Endothelial cell of umbilical vein (primary cell): ENCODE measurements at regions of chr7 and their contacts with region 1.

Region 1: GRCh38 chr7:131071786-131072504 is 255.7 kb upstream of the MKLN1 start:
- DNase-seq: peak; percentile 96
- H3K4me3 ChIP-seq: peak overlapping the region in 1 of 3 experiments; percentile 51
- H3K27ac ChIP-seq: peak overlapping the region; percentile 88
- H3K4me1 ChIP-seq: peaks cover 17% of the 10 kb centered on the region
- H3K27me3 ChIP-seq: no peaks in the 10 kb centered on the region
- CTCF ChIP-seq: peak; percentile 11 to 16
- POLR2A ChIP-seq: no peak

Region 2: DNA sequence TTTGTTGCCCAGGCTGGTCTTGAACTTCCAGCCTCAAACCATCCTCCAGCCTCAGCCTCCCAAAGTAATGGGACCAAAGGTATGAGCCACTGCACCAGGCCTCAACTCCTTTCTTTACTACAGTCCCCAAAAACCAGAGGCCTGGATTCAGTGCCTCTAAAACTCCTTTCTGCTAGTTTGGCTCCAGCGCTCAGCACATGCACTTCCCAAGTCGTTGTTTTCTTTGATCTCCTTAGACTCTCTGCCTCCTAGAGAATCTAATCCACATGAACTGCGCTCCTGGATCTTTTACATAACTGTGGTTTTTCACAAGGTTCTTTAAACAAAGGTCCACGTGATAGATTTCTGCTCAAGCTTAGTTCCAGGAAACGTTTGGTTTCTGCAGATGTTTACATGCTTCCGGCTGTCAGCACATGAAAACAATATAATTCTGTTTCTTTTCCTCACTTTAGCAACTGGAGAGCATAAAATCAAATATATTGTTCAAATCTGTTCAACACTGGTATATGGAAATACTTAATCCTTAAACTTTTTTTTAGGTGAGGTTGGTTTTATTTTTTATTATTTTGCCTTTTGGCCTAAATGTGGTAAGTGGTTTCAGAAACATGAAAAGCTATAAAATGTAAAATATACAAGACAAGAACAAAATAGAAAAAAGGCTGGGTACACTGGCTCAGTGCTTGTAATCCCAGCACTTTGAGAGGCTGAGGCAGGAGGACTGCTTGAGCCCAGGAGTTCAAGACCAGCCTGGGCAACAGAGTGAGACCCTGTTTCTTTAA is 14.7 kb before region 1 on chr7:
- CTCF ChIA-PET with region 1: interaction called, 27 read pairs
- POLR2A ChIA-PET with region 1: interaction called, 4 read pairs
- dilution Hi-C with region 1: no loop called
- intact Hi-C with region 1: no loop called
- DNase-seq: peak; percentile 75
- H3K4me3 ChIP-seq: no peak overlapping the region
- H3K27ac ChIP-seq: peak overlapping the region; percentile 64
- H3K4me1 ChIP-seq: peaks cover 9% of the 10 kb centered on the region
- H3K27me3 ChIP-seq: no peaks in the 10 kb centered on the region
- CTCF ChIP-seq: no peak
- POLR2A ChIP-seq: no peak

Region 3: GRCh38 chr7:131096267-131096927 is 24.5 kb after region 1 on chr7:
- CTCF ChIA-PET with region 1: no interaction called
- POLR2A ChIA-PET with region 1: no interaction called
- dilution Hi-C with region 1: no loop called
- intact Hi-C with region 1: no loop called
- DNase-seq: no peak
- H3K4me3 ChIP-seq: no peak overlapping the region
- H3K27ac ChIP-seq: no peak overlapping the region
- H3K4me1 ChIP-seq: no peaks in the 10 kb centered on the region
- H3K27me3 ChIP-seq: no peaks in the 10 kb centered on the region
- CTCF ChIP-seq: no peak
- POLR2A ChIP-seq: no peak

Region 4: DNA sequence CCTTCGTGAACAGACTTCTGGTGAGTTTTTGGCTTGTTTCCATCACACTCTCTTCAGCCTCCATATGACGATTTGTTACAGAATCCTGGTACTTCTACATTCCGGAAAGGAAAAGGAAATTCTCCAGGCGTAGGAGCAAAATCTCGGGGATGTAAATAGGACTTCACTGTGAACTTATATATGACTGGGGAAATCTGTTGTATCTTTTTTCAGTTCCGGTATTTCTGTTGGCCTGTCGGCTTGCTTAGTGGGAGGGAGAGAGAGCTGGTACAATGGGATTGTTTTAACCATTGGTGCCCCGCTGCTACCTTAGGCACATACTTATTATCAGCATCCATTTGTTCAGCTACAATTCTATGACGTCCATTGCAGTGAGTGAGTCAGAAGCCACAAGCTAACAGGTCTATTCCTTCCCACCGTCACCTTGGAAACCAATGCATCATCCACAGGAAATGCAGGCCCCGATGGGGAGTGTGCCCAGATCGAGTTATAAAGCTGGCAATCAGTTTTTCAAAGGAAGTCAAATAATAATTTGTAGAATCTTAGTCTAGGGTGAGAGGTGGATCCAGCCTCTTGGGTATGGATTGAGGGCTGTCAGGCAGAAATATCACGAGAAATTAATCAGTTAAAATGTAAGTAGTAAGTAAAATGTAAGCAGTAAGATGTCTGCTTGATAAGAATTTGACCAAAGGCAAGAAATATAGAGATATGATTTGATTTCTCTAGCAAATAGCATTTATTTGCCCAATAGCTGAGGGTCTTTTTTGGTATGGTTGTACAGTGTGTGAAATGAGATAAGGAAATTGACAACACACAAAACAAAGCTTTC is 163.8 kb after region 1 on chr7:
- CTCF ChIA-PET with region 1: no interaction called
- POLR2A ChIA-PET with region 1: no interaction called
- dilution Hi-C with region 1: no loop called
- intact Hi-C with region 1: loop called (anchors 1 kb)
- DNase-seq: peak; percentile 96
- H3K4me3 ChIP-seq: peak overlapping the region in 1 of 3 experiments; percentile 47
- H3K27ac ChIP-seq: peak overlapping the region; percentile 95
- H3K4me1 ChIP-seq: peaks cover 33% of the 10 kb centered on the region
- H3K27me3 ChIP-seq: no peaks in the 10 kb centered on the region
- CTCF ChIP-seq: no peak
- POLR2A ChIP-seq: no peak

Region 5: GRCh38 chr7:131302876-131303707 is 231.1 kb after region 1 on chr7:
- CTCF ChIA-PET with region 1: interaction called, 17 read pairs
- POLR2A ChIA-PET with region 1: no interaction called
- dilution Hi-C with region 1: no loop called
- intact Hi-C with region 1: loop called (anchors 1 kb)
- DNase-seq: peak; percentile 33
- H3K4me3 ChIP-seq: no peak overlapping the region
- H3K27ac ChIP-seq: no peak overlapping the region
- H3K4me1 ChIP-seq: no peaks in the 10 kb centered on the region
- H3K27me3 ChIP-seq: no peaks in the 10 kb centered on the region
- CTCF ChIP-seq: peak; percentile 20 to 42
- POLR2A ChIP-seq: no peak

Region 6: DNA sequence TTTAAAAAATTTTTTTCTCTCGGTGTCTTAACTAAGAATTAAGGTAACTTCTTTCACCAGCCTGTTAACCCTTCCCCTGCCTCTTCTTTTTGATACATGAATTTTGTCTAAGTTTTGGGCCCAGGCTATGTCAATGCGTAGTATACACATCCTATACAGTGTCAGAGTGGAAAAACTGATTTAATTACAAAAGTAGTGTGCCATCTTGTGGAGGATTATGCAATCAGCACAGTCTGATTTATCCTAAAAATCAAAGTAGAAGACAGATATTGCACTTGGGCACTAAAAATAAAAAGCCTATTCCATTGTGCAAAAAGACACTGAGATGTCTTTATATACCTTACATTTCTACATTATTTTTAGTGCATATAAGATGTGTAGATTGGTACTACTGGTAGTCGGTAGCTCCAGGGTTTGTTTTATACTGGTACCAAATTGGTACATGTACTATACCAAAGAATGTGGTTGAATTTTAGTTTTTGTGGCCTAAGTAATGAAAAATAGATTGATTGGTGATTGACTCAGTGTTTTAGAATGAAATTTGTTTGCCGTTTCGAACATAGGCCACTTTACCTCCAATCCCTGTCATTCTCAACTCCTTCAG is 352.4 kb after region 1 on chr7:
- CTCF ChIA-PET with region 1: interaction called, 16 read pairs
- POLR2A ChIA-PET with region 1: no interaction called
- dilution Hi-C with region 1: no loop called
- intact Hi-C with region 1: loop called (anchors 1 kb)
- DNase-seq: peak; percentile 66
- H3K4me3 ChIP-seq: no peak overlapping the region
- H3K27ac ChIP-seq: no peak overlapping the region
- H3K4me1 ChIP-seq: no peaks in the 10 kb centered on the region
- H3K27me3 ChIP-seq: no peaks in the 10 kb centered on the region
- CTCF ChIP-seq: peak; percentile 39 to 43
- POLR2A ChIP-seq: no peak

Region 7: DNA sequence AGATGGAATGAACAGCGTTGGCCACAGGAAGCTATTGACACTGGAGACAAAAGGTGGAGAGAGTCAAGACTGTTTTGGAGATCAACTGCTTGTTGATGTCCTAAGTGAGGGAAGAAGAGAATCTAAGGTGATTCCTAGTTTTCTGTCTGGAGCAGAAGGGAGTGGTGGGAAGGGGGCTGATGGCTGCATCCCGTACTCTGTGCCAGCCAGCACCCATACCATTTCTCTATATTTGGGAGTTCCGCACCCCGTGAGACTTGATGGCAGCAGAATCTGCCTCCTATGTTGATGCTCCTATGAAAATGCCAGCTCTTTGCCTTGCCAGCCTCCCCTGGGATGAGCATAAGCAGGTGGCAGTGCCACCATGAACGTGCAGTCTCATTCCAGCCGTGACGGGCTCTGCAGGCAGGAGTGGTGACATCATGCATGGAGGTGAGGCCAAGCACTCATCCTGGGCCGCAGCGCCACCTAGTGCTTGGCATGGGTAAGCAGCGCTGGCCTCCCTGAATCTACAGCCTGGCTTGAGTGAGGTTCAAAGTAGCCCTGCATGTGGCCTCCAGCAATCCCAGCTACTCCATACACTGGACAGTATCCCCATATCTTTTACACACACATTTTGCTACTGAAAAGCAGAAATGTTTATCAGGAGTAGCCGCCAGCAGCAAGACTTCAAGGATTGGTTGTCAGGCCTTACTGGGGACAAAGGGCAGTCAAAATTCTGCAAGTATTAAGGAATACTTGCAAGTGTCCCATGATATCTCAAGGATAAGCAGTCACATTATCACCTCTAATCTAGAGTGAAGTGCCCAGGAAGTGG is 441.5 kb after region 1 on chr7:
- CTCF ChIA-PET with region 1: no interaction called
- POLR2A ChIA-PET with region 1: no interaction called
- dilution Hi-C with region 1: no loop called
- intact Hi-C with region 1: loop called (anchors 2 kb)
- DNase-seq: peak; percentile 88
- H3K4me3 ChIP-seq: no peak overlapping the region
- H3K27ac ChIP-seq: peak overlapping the region; percentile 67
- H3K4me1 ChIP-seq: peaks cover 21% of the 10 kb centered on the region
- H3K27me3 ChIP-seq: no peaks in the 10 kb centered on the region
- CTCF ChIP-seq: peak; percentile 97 to 100
- POLR2A ChIP-seq: no peak

Region 8: GRCh38 chr7:131808736-131809135 is 736.8 kb after region 1 on chr7:
- CTCF ChIA-PET with region 1: no interaction called
- POLR2A ChIA-PET with region 1: no interaction called
- dilution Hi-C with region 1: no loop called
- intact Hi-C with region 1: no loop called
- DNase-seq: no peak
- H3K4me3 ChIP-seq: no peak overlapping the region
- H3K27ac ChIP-seq: no peak overlapping the region
- H3K4me1 ChIP-seq: no peaks in the 10 kb centered on the region
- H3K27me3 ChIP-seq: peaks cover 0 to 4% of the 10 kb centered on the region in 2 experiments
- CTCF ChIP-seq: no peak
- POLR2A ChIP-seq: no peak